HCT116 (cell line): ENCODE measurements at regions of chr12 and their contacts with region 1.

Region 1: DNA sequence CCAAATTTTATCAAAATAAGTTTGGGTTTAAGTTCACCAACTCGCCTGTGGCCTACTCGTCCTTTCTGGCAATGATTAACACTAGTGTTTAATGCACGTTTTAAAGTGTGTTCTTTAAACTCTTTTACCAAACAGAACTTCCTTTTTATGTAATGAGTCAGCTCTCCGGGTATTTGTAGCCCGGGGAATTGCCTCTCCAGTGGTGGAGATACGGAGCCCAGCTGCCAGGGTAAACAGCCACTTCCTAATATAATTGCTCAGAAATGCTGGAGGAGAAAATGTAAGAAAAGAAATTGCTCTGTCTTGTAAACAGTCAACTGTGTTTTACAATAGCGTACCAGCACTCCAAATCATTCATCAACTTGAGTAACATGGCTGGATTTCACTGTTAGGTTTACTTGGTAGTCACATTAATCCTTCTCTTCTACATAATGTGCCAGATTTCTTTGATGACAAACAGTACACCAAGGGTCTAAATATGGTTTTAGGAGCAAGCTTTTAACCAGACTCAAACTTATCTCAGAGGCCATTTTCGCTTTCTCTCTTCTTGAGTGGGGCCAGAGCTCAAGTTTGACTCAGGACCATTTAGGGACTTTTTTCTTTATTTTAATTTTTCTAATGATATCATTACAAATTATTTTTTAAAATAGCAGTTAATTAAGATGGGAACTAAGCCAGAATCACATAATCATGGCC is 101.2 kb upstream of the SLC38A2 start:
- DNase-seq: peak; percentile 87
- ATAC-seq: peak; percentile 66
- H3K4me3 ChIP-seq: peak overlapping the region; percentile 10 to 27; a peak in 3 of 4 replicates
- H3K27ac ChIP-seq: peak overlapping the region; percentile 100
- H3K4me1 ChIP-seq: peaks cover 87 to 93% of the 10 kb centered on the region in 2 experiments
- H3K27me3 ChIP-seq: no peaks in the 10 kb centered on the region
- CTCF ChIP-seq: no peak
- POLR2A ChIP-seq: no peak
- RAD21 ChIP-seq: peak; percentile 45

Region 2: GRCh38 chr12:46450279-46450748 is 23.5 kb before region 1 on chr12:
- CTCF ChIA-PET with region 1: no interaction called
- POLR2A ChIA-PET with region 1: interaction called, 10 read pairs
- RAD21 ChIA-PET with region 1: no interaction called
- intact Hi-C with region 1: no loop called
- DNase-seq: no peak
- ATAC-seq: peak; percentile 46
- H3K4me3 ChIP-seq: peak overlapping the region in 1 of 2 experiments; percentile 4; a peak in 1 of 4 replicates
- H3K27ac ChIP-seq: peak overlapping the region; percentile 96
- H3K4me1 ChIP-seq: peaks cover 91 to 94% of the 10 kb centered on the region in 2 experiments
- H3K27me3 ChIP-seq: no peaks in the 10 kb centered on the region
- CTCF ChIP-seq: no peak
- POLR2A ChIP-seq: no peak
- RAD21 ChIP-seq: peak; percentile 13; the same call in 1 of the 2 replicates

Region 3: GRCh38 chr12:46460682-46461210 is 13.0 kb before region 1 on chr12:
- CTCF ChIA-PET with region 1: no interaction called
- POLR2A ChIA-PET with region 1: no interaction called
- RAD21 ChIA-PET with region 1: no interaction called
- intact Hi-C with region 1: no loop called
- DNase-seq: no peak
- ATAC-seq: no peak
- H3K4me3 ChIP-seq: no peak overlapping the region
- H3K27ac ChIP-seq: no peak overlapping the region
- H3K4me1 ChIP-seq: peaks cover 42 to 61% of the 10 kb centered on the region in 2 experiments
- H3K27me3 ChIP-seq: no peaks in the 10 kb centered on the region
- CTCF ChIP-seq: no peak
- POLR2A ChIP-seq: no peak
- RAD21 ChIP-seq: no peak

Region 4: DNA sequence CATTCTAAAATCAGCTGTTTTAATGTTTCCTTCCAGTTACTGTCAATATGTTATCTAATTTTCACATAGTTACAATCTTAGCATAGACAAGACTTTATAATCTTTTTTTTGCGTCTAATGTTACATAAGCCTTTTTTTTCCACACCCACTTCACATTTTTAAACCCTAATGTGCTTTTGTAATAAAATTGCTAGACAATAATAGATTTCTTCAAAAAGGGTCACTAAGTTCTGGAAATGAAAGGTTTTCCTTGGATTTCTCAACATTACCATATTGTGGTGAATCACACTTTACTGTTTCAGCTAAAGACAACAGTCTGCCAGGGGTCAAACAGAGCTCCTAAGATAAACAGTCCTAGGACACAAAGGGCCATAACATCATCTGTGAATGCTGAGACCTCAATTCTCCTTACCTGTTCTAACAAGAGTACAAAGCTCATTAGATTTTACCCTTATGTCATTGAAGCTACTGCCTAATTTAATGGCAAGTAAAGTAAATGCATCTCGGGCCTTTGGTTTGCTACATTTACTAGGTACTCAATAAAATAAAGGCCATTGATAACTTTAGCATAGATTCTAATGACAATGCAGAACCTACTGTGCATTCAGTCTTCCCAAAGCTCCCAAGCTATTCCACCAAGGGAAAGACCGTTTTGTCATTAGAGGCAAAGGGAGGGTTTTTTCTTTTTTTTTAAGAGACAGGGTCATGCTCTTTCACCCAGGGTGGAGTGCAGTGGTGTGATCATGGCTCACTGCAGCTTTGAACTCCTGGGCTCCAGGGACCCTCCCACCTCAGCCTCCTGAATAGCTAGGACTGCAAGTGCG is 10.0 kb after region 1 on chr12:
- CTCF ChIA-PET with region 1: no interaction called
- POLR2A ChIA-PET with region 1: interaction called, 11 read pairs
- RAD21 ChIA-PET with region 1: no interaction called
- intact Hi-C with region 1: no loop called
- DNase-seq: no peak
- ATAC-seq: no peak
- H3K4me3 ChIP-seq: no peak overlapping the region
- H3K27ac ChIP-seq: no peak overlapping the region
- H3K4me1 ChIP-seq: peaks cover 19 to 56% of the 10 kb centered on the region in 2 experiments
- H3K27me3 ChIP-seq: no peaks in the 10 kb centered on the region
- CTCF ChIP-seq: no peak
- POLR2A ChIP-seq: no peak
- RAD21 ChIP-seq: no peak

Region 5: DNA sequence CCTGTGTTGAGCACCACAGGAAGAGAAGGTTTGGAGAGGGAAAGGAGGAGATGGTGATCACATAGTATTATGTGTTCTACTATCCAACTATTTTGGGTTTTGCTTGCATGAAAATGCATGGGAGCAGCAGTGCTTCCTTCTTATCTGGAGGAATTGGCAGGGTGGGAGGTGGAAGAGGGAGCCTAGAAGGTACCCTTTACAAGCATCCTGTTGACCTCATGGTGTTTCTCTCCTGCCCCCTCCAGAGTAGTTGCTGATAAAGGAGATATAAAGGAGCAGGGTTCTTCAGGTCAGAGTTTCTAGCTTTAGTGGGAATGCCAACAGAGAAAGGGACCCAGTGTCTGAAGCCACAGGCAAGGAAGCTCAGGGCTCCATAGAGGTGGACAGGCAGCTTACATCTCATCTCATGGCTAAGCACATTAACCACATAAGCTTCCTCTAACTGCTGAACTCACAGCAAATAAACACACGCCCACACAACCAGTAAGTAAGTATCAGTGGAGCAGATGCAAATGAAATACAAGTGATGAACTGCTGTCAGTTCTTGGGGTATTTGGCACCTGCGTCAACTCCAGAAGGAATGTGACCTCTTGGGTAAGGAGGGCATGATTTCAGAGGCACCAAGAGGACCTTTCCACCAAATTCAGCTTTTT is 73.0 kb after region 1 on chr12:
- CTCF ChIA-PET with region 1: no interaction called
- POLR2A ChIA-PET with region 1: interaction called, 13 read pairs
- RAD21 ChIA-PET with region 1: no interaction called
- intact Hi-C with region 1: no loop called
- DNase-seq: no peak
- ATAC-seq: no peak
- H3K4me3 ChIP-seq: no peak overlapping the region
- H3K27ac ChIP-seq: peak overlapping the region; percentile 91
- H3K4me1 ChIP-seq: peaks cover 55 to 58% of the 10 kb centered on the region in 2 experiments
- H3K27me3 ChIP-seq: no peaks in the 10 kb centered on the region
- CTCF ChIP-seq: no peak
- POLR2A ChIP-seq: no peak
- RAD21 ChIP-seq: no peak

Region 6: DNA sequence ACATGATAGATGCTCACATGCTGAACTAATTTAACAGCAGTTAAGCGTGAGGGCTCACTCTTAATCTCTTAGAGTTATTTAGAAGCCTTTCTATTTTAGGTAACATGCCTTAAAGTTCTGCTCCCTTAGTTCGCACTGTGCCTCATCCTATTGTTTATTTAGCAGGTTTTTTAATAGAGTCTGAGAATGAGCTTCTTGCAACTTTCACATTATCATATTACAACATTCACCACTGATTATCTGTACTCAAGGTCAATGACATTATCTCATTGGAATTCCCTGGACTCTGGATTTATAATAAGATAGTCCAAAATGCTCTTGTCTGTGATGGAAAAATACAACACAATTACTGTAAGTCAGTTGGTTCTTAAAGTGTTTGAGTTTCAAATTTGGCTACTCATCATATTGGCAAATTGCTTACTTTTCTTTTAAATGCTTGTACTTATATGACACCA is 82.3 kb after region 1 on chr12:
- CTCF ChIA-PET with region 1: no interaction called
- POLR2A ChIA-PET with region 1: interaction called, 5 read pairs
- RAD21 ChIA-PET with region 1: no interaction called
- intact Hi-C with region 1: loop called (anchors 2 kb)
- DNase-seq: peak; percentile 84
- ATAC-seq: peak; percentile 28
- H3K4me3 ChIP-seq: peak overlapping the region in 1 of 2 experiments; percentile 25; a peak in 2 of 4 replicates
- H3K27ac ChIP-seq: peak overlapping the region; percentile 91
- H3K4me1 ChIP-seq: peaks cover 84 to 91% of the 10 kb centered on the region in 2 experiments
- H3K27me3 ChIP-seq: no peaks in the 10 kb centered on the region
- CTCF ChIP-seq: no peak
- POLR2A ChIP-seq: no peak
- RAD21 ChIP-seq: peak; percentile 30; the same call in 1 of the 2 replicates

Region 7: DNA sequence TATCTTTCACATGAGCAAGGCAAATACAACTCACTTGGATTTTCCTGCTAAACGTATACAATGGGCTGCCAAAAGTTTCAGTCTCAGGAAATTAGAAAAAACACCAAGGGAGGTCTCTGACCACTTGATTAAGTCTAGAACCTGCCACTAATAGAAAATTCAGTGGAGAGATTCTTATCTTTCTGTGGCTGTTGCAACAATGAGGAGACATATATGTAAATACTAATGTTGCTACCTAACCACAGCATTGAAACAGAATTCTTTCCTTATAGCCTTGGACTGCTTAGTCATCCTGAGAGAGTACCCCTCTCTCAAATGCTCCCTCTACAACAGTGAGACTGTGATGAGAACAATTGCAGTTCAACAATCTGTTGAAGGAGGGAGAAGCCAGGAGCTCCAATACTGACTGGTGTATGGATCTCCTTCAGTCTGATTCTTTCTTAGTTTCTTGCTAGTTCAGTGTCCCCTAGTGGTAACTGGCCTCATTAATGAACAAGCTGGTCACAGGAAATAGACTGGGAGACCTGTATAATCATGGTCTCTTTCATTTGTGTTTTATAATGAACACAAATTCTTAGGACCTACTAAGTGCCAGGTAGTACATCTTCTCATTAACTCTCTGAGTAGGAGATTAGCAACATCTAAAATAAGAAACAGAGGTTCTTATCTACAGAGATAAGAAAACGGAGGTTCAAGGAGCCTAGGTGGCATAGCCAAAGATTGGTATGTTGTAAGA is 187.5 kb after region 1 on chr12:
- CTCF ChIA-PET with region 1: interaction called, 4 read pairs
- POLR2A ChIA-PET with region 1: no interaction called
- RAD21 ChIA-PET with region 1: no interaction called
- intact Hi-C with region 1: loop called (anchors 10 kb)
- DNase-seq: peak; percentile 71
- ATAC-seq: peak; percentile 78
- H3K4me3 ChIP-seq: no peak overlapping the region
- H3K27ac ChIP-seq: peak overlapping the region; percentile 21; the same call in 1 of the 2 replicates
- H3K4me1 ChIP-seq: peaks cover 53 to 65% of the 10 kb centered on the region in 2 experiments
- H3K27me3 ChIP-seq: no peaks in the 10 kb centered on the region
- CTCF ChIP-seq: peak; percentile 69 to 87 (median 73); a peak in 5 of 6 replicates
- POLR2A ChIP-seq: no peak
- RAD21 ChIP-seq: peak; percentile 93